ENCODE measurements at regions of chr4 and their contacts with region 1.

Region 1: DNA sequence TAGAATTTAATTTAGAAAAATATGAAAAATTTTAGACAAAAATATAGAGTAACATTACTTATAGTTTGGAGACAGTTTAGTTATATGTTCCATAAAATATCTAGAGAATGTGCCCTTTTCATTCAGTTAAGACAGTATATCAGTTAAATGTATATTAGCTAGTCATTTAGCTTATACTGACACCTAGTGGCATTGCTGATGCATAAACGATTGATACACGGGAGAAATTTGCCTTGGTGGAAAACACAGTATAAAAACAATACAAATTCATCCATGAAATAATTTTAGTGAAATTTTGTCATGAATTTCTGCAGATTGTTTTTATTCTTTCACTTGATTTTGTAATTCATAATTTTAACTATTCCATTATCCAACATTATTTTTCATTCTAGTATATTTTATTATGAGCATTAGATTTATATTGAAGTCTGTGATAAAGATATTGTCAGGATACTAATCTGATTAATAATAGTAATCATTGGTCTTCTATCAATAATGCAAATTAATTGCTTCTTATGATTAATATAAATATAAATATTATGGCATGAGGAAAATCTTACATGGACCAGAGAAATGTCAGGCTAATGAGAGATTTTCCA is 219.0 kb downstream of the TLL1 start:
- DNase-seq: no peak
- ATAC-seq: no peak
- H3K4me3 ChIP-seq: no peak overlapping the region
- H3K27ac ChIP-seq: no peak overlapping the region
- H3K4me1 ChIP-seq: no peaks in the 10 kb centered on the region
- H3K27me3 ChIP-seq: peaks cover 0 to 3% (median 0%) of the 10 kb centered on the region in 7 donors
- CTCF ChIP-seq: peak; percentile 64 to 92 (median 74)

Region 2: DNA sequence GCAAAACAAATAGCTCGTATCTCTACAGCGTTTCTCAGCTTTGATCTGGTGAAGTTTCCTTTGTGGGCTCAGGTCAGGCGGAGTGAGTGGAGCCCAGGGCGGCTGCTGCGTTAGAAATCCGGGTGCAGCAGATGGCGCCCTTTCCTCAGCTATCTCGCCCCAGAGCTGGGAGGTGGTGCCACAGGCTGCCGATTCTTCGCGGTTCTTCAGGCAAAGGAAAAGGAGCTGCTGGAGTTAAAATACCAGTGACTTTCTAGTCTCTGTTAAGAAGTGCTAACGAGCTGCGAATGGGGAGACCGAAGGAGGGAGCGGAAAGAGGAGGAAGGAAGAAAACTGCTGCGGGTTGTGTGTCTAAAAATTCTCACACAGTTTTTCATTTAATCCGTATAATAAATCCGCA is 598.7 kb before region 1 on chr4:
- intact Hi-C with region 1: loop called in 5 of 10 experiments (anchors 1 to 5 kb)
- DNase-seq: peak; percentile 51 to 74
- ATAC-seq: peak; percentile 86 to 97 (median 92)
- H3K4me3 ChIP-seq: peak overlapping the region in 2 of 10 donors; percentile 13 to 25
- H3K27ac ChIP-seq: no peak overlapping the region
- H3K4me1 ChIP-seq: peaks cover 0 to 7% (median 0%) of the 10 kb centered on the region in 9 donors
- H3K27me3 ChIP-seq: peaks cover 0 to 13% (median 0%) of the 10 kb centered on the region in 7 donors
- CTCF ChIP-seq: peak; percentile 39 to 83 (median 67)

Region 3: DNA sequence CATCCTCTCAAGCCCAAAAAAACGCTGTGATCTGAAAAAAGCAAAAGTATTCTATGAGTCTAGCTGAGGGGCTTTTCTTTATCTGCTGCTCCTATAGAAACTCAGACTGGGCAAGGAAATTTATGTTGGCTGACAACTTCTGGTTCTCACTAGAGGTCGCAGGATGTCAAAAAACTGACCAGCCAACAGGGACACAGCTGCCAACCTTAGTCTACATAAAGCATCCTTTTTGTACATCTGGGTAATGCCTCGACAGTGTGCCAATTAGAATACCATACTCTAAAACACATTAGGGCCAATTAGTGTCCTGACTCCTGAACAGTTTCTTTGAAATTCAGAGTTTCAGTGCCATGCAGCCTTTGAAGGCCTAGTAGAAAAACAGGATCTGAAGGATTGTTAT is 227.7 kb before region 1 on chr4:
- intact Hi-C with region 1: loop called in 1 of 10 experiments (anchors 10 kb)
- DNase-seq: no peak
- ATAC-seq: no peak
- H3K4me3 ChIP-seq: no peak overlapping the region
- H3K27ac ChIP-seq: no peak overlapping the region
- H3K4me1 ChIP-seq: no peaks in the 10 kb centered on the region
- H3K27me3 ChIP-seq: no peaks in the 10 kb centered on the region
- CTCF ChIP-seq: peak in 1 of 9 donors; percentile 15

Region 4: DNA sequence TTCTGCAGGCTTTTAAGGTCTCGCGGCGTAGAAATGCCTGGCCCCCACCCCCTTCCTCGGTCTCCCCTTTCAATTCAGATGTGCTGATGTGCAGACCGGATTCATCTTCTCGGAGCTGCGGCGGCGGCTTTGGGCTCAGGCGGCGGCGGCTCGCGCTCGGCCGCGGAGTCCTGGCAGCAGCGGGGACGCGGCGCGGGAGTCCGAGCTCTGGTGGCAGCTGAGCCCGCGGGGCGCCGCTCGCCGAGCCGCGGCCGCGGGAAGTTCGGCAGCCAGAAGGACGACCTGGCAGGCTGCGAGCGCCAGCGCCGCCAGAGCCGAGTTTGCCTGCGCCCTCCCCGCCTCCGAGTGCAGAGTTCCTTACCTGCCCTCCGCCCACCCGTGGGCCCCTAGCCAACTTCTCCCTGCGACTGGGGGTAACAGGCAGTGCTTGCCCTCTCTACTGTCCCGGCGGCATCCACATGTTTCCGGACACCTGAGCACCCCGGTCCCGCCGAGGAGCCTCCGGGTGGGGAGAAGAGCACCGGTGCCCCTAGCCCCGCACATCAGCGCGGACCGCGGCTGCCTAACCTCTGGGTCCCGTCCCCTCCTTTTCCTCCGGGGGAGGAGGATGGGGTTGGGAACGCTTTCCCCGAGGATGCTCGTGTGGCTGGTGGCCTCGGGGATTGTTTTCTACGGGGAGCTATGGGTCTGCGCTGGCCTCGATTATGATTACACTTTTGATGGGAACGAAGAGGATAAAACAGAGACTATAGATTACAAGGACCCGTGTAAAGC is 218.5 kb before region 1 on chr4:
- intact Hi-C with region 1: loop called in 3 of 10 experiments (anchors 10 kb)
- DNase-seq: peak; percentile 13 to 36
- ATAC-seq: peak; percentile 63 to 85 (median 73)
- H3K4me3 ChIP-seq: peak overlapping the region; percentile 49 to 73 (median 60)
- H3K27ac ChIP-seq: peak overlapping the region in 4 of 10 donors; percentile 36 to 63 (median 45)
- H3K4me1 ChIP-seq: peaks cover 0 to 24% (median 18%) of the 10 kb centered on the region in 9 donors
- H3K27me3 ChIP-seq: peaks cover 0 to 47% (median 10%) of the 10 kb centered on the region in 7 donors
- CTCF ChIP-seq: no peak